Activated B cell treated with CpG ODN at 0.5 μM for 24 hours (primary cell): ENCODE measurements at regions of chr6 and their contacts with region 1.

Region 1: DNA sequence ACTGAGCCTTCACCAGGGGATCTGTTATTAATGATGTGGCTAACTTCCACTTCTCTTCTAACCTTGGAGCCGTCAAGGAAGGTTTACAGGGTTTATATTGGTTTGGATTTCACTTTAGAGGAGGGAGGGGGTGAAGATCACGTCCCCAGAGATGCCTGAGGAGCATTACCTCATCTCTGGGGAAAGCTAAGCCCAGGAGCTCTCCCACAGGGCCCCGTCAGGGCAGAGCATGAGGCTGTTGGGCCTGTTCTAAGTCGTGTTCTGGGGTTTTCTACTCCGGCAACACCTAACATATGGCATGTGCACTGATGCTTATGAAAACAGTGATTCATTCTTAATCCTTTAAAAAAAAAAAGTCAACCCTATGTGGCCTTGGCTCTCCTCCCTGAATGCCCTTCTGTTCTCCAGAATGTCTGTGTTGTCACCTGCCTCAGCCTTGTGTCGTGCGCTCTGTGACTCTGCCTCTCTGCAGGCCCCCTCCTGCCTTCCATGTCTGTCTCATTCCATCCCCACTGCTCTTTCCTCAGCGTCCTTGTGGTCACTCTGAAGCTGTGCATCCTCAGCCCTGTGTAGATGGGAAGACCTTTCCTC is 97.4 kb upstream of the JARID2 start:
- DNase-seq: no peak
- ATAC-seq: peak; percentile 62
- H3K4me3 Mint-ChIP-seq: no peak overlapping the region
- H3K27ac Mint-ChIP-seq: peak overlapping the region; percentile 38
- H3K4me1 Mint-ChIP-seq: peaks cover 41% of the 10 kb centered on the region
- H3K27me3 Mint-ChIP-seq: no peaks in the 10 kb centered on the region
- CTCF ChIP-seq: no peak

Region 2: GRCh38 chr6:14876778-14877613 is 271.5 kb before region 1 on chr6:
- CTCF ChIA-PET with region 1: no interaction called
- POLR2A ChIA-PET with region 1: interaction called, 3 read pairs
- intact Hi-C with region 1: loop called (anchors 2 kb)
- DNase-seq: no peak
- ATAC-seq: peak; percentile 86
- H3K4me3 Mint-ChIP-seq: peak overlapping the region; percentile 53
- H3K27ac Mint-ChIP-seq: peak overlapping the region; percentile 82
- H3K4me1 Mint-ChIP-seq: peaks cover 42% of the 10 kb centered on the region
- H3K27me3 Mint-ChIP-seq: no peaks in the 10 kb centered on the region
- CTCF ChIP-seq: no peak

Region 3: GRCh38 chr6:15184441-15184861 is 36.0 kb after region 1 on chr6:
- CTCF ChIA-PET with region 1: interaction called, 3 read pairs
- POLR2A ChIA-PET with region 1: no interaction called
- intact Hi-C with region 1: loop called (anchors 1 kb)
- DNase-seq: no peak
- ATAC-seq: peak; percentile 96
- H3K4me3 Mint-ChIP-seq: no peak overlapping the region
- H3K27ac Mint-ChIP-seq: peak overlapping the region; percentile 6
- H3K4me1 Mint-ChIP-seq: peaks cover 12% of the 10 kb centered on the region
- H3K27me3 Mint-ChIP-seq: no peaks in the 10 kb centered on the region
- CTCF ChIP-seq: no peak

Region 4: GRCh38 chr6:15312500-15312899 is 164.0 kb after region 1 on chr6:
- CTCF ChIA-PET with region 1: no interaction called
- POLR2A ChIA-PET with region 1: interaction called, 10 read pairs
- intact Hi-C with region 1: no loop called
- DNase-seq: no peak
- ATAC-seq: peak; percentile 50
- H3K4me3 Mint-ChIP-seq: peak overlapping the region; percentile 69
- H3K27ac Mint-ChIP-seq: peak overlapping the region; percentile 86
- H3K4me1 Mint-ChIP-seq: peaks cover 91% of the 10 kb centered on the region
- H3K27me3 Mint-ChIP-seq: no peaks in the 10 kb centered on the region
- CTCF ChIP-seq: no peak

Region 5: GRCh38 chr6:15365273-15365687 is 216.8 kb after region 1 on chr6:
- CTCF ChIA-PET with region 1: no interaction called
- POLR2A ChIA-PET with region 1: no interaction called
- intact Hi-C with region 1: no loop called
- DNase-seq: no peak
- ATAC-seq: peak; percentile 60
- H3K4me3 Mint-ChIP-seq: peak overlapping the region; percentile 53
- H3K27ac Mint-ChIP-seq: no peak overlapping the region
- H3K4me1 Mint-ChIP-seq: peaks cover 36% of the 10 kb centered on the region
- H3K27me3 Mint-ChIP-seq: no peaks in the 10 kb centered on the region
- CTCF ChIP-seq: no peak